ENCODE measurements at regions of chr3 and their contacts with region 1.

Region 1: DNA sequence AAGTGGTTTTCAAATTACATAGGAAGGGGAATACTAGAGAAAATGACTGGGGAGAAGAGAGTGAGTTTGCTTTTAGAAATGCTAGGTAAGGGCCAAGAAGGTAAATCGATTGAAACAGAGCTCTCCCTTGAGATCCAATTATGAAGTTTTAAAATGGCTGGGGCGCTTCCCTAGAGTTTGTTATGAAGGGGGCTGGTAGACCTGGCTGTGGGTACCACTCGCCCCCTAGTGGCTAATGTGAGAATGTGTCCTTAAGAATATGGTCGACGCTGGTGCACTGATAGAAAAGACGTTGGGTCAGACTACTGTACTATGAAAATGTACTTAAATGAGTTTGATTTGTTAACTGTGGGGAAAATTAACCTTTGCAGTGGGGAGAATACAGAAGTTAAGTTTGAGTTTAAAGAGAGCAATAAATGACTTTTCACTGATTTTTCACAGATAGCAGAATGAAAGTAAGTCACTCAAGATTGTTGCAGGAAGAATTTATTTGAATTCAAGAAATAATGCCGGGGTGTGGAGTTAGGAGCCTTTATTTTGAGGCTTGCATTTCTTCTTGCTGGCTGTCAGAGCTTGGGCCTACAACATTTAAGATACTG is 9.2 kb downstream of the TMPRSS7 start:
- DNase-seq: peak; percentile 83
- H3K4me3 Mint-ChIP-seq: no peak overlapping the region
- H3K27ac Mint-ChIP-seq: no peak overlapping the region
- H3K4me1 Mint-ChIP-seq: peaks cover 10% of the 10 kb centered on the region
- H3K27me3 Mint-ChIP-seq: no peaks in the 10 kb centered on the region
- CTCF ChIP-seq: peak; percentile 79

Region 2: GRCh38 chr3:111594205-111594604 is 449.5 kb before region 1 on chr3:
- CTCF ChIA-PET with region 1: no interaction called
- POLR2A ChIA-PET with region 1: no interaction called
- intact Hi-C with region 1: no loop called
- DNase-seq: peak; percentile 75
- H3K4me3 Mint-ChIP-seq: peak overlapping the region; percentile 64
- H3K27ac Mint-ChIP-seq: peak overlapping the region; percentile 82
- H3K4me1 Mint-ChIP-seq: peaks cover 70% of the 10 kb centered on the region
- H3K27me3 Mint-ChIP-seq: no peaks in the 10 kb centered on the region
- CTCF ChIP-seq: no peak

Region 3: GRCh38 chr3:111998636-111999483 is 44.8 kb before region 1 on chr3 and contains the start of gene TAGLN3:
- CTCF ChIA-PET with region 1: interaction called, 165 read pairs
- POLR2A ChIA-PET with region 1: no interaction called
- intact Hi-C with region 1: no loop called
- DNase-seq: peak; percentile 29
- H3K4me3 Mint-ChIP-seq: peak within 1 kb of the TSS; percentile 50
- H3K27ac Mint-ChIP-seq: no peak within 1 kb of the TSS
- H3K4me1 Mint-ChIP-seq: peaks cover 9% of the 10 kb centered on the region
- H3K27me3 Mint-ChIP-seq: no peaks in the 10 kb centered on the region
- CTCF ChIP-seq: no peak
- total RNA-seq, gene TAGLN3: not detected in 2 replicates

Region 4: DNA sequence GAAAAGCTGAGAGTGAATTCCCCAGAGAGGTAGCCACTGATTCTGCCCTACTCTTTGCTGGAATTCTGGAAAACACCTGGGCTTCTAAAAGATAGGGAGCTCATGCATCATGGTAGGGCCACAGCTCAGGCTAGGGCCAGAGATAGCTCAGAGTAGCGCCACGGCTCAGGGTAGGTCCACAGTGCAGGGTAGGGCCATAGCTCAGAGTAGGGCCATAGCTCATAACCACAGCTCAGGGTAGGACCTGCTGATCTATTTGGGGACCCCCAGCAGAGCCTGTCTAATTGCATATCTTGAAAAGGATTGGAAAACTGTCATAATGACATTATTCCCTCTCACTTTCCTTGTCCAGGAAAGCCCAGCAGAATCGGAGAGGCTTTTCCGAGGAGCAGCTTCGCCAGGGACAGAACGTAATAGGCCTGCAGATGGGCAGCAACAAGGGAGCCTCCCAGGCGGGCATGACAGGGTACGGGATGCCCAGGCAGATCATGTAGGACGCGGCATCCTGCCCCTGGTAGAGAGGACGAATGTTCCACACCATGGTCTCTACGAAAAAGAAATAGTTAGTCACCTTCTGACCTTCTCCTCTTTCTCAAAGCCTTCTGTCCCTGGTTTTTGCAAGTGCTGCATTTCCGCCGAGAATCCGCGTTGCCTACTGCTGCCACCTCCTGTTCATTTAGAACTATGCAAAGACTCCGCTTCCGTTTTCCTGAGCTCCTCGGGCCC is 30.5 kb before region 1 on chr3:
- CTCF ChIA-PET with region 1: interaction called, 15 read pairs
- POLR2A ChIA-PET with region 1: interaction called, 3 read pairs
- intact Hi-C with region 1: no loop called
- DNase-seq: peak; percentile 75
- H3K4me3 Mint-ChIP-seq: no peak overlapping the region
- H3K27ac Mint-ChIP-seq: no peak overlapping the region
- H3K4me1 Mint-ChIP-seq: no peaks in the 10 kb centered on the region
- H3K27me3 Mint-ChIP-seq: no peaks in the 10 kb centered on the region
- CTCF ChIP-seq: peak; percentile 42

Region 5: DNA sequence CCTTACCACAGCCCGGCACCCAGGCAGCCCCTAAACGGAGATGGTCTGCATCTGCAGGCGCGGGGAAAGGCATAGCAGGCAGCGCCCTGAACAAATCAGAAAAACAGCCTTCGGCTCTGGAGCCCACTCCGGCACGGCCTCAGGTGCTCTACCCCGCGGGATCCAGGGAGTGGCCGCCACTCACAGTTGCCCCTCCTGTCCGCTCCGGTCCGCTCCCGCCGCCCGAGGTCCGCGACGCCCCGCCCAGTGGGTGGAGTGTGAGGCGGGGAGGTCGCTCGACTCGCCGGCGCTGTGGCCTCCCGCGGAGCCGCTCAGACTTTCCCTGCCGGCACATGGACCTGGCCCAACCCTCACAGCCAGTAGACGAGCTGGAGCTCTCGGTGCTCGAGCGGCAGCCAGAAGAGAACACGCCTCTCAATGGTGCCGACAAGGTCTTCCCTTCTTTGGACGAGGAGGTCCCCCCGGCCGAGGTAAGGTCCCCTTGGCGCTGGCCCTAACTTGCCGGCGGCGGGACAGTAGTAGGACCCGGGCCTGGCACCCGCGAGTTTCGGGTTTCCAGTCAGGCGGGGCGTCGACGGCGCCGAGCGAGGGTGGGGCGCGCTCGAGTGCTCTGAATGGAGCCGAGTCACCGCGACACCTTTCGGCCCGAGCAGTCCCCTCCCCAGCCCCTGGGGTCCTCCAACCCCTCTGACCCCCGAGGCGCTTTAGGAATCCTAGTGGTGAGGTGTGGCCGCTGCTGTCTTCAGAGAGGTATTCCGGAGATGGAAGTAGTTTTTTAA is 42.6 kb after region 1 on chr3 and contains the start of gene C3orf52:
- CTCF ChIA-PET with region 1: interaction called, 6 read pairs
- POLR2A ChIA-PET with region 1: no interaction called
- intact Hi-C with region 1: loop called (anchors 2 kb)
- DNase-seq: peak; percentile 87
- H3K4me3 Mint-ChIP-seq: peak within 1 kb of the TSS; percentile 90
- H3K27ac Mint-ChIP-seq: peak within 1 kb of the TSS; percentile 96
- H3K4me1 Mint-ChIP-seq: peaks cover 25% of the 10 kb centered on the region
- H3K27me3 Mint-ChIP-seq: no peaks in the 10 kb centered on the region
- CTCF ChIP-seq: no peak
- total RNA-seq, gene C3orf52: 10.4 and 16.1 TPM in 2 replicates

Region 6: GRCh38 chr3:112175646-112176045 is 131.9 kb after region 1 on chr3:
- CTCF ChIA-PET with region 1: no interaction called
- POLR2A ChIA-PET with region 1: no interaction called
- intact Hi-C with region 1: no loop called
- DNase-seq: no peak
- H3K4me3 Mint-ChIP-seq: no peak overlapping the region
- H3K27ac Mint-ChIP-seq: no peak overlapping the region
- H3K4me1 Mint-ChIP-seq: no peaks in the 10 kb centered on the region
- H3K27me3 Mint-ChIP-seq: no peaks in the 10 kb centered on the region
- CTCF ChIP-seq: no peak

Measured in MCF 10A (cell line).